H1 (cell line): ENCODE measurements at regions of chr22 and their contacts with region 1.

Region 1: GRCh38 chr22:43385770-43386641 is 25.8 kb upstream of the MPPED1 start:
- DNase-seq: peak; percentile 53 to 90
- H3K4me3 ChIP-seq: no peak overlapping the region
- H3K27ac ChIP-seq: no peak overlapping the region
- H3K4me1 ChIP-seq: peaks cover 0 to 9% (median 2%) of the 10 kb centered on the region in 4 experiments; a peak in 3 of 7 replicates
- H3K27me3 ChIP-seq: peaks cover 0 to 12% (median 3%) of the 10 kb centered on the region in 4 experiments; a peak in 5 of 7 replicates
- CTCF ChIP-seq: peak; percentile 95 to 96 (median 96)
- EP300 ChIP-seq: no peak
- POLR2A ChIP-seq: no peak
- RAD21 ChIP-seq: peak; percentile 100

Region 2: GRCh38 chr22:43244402-43244801 is 141.6 kb before region 1 on chr22:
- CTCF ChIA-PET with region 1: interaction called, 14 read pairs
- POLR2A ChIA-PET with region 1: no interaction called
- DNase-seq: no peak
- H3K4me3 ChIP-seq: no peak overlapping the region
- H3K27ac ChIP-seq: no peak overlapping the region
- H3K4me1 ChIP-seq: no peaks in the 10 kb centered on the region; a peak in 1 of 7 replicates
- H3K27me3 ChIP-seq: no peaks in the 10 kb centered on the region
- CTCF ChIP-seq: peak in 2 of 3 experiments; percentile 30 to 53; a peak in 2 of 4 replicates
- EP300 ChIP-seq: no peak
- POLR2A ChIP-seq: no peak
- RAD21 ChIP-seq: no peak

Region 3: GRCh38 chr22:43363315-43364168 is 22.5 kb before region 1 on chr22:
- CTCF ChIA-PET with region 1: interaction called, 20 read pairs
- POLR2A ChIA-PET with region 1: no interaction called
- DNase-seq: no peak
- H3K4me3 ChIP-seq: no peak overlapping the region
- H3K27ac ChIP-seq: no peak overlapping the region
- H3K4me1 ChIP-seq: peaks cover 0 to 4% (median under 1%) of the 10 kb centered on the region in 4 experiments; a peak in 4 of 7 replicates
- H3K27me3 ChIP-seq: no peaks in the 10 kb centered on the region
- CTCF ChIP-seq: no peak
- EP300 ChIP-seq: no peak
- POLR2A ChIP-seq: no peak
- RAD21 ChIP-seq: no peak

Region 4: GRCh38 chr22:43404673-43405385 is 18.8 kb after region 1 on chr22:
- CTCF ChIA-PET with region 1: interaction called, 26 read pairs
- POLR2A ChIA-PET with region 1: no interaction called
- DNase-seq: no peak
- H3K4me3 ChIP-seq: no peak overlapping the region
- H3K27ac ChIP-seq: no peak overlapping the region
- H3K4me1 ChIP-seq: no peaks in the 10 kb centered on the region
- H3K27me3 ChIP-seq: peaks cover 0 to 5% (median 3%) of the 10 kb centered on the region in 4 experiments; a peak in 3 of 7 replicates
- CTCF ChIP-seq: no peak
- EP300 ChIP-seq: no peak
- POLR2A ChIP-seq: no peak
- RAD21 ChIP-seq: no peak

Region 5: DNA sequence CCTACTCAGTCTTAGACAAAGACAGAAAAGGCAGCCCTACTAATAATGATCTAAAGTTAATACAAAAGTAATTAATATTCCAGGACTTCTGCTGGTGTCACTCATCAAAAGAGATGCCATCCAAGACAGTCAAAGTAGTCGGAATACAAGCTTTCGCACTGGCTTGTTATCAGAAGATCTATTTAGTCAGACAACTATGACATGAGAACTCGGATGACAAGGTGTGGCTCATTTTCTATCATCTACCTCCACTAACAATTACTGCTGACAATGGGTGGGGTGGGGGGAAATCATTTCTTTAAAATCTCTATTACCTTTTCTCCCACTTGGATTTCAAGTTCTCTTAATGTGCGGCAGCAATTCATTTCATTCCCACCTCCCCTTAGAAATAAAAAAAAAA is 369.4 kb after region 1 on chr22:
- CTCF ChIA-PET with region 1: no interaction called
- POLR2A ChIA-PET with region 1: no interaction called
- DNase-seq: no peak
- H3K4me3 ChIP-seq: no peak overlapping the region
- H3K27ac ChIP-seq: no peak overlapping the region
- H3K4me1 ChIP-seq: peaks cover 0 to 6% (median 0%) of the 10 kb centered on the region in 4 experiments; a peak in 2 of 7 replicates
- H3K27me3 ChIP-seq: no peaks in the 10 kb centered on the region; a peak in 1 of 7 replicates
- CTCF ChIP-seq: no peak
- EP300 ChIP-seq: no peak
- POLR2A ChIP-seq: no peak
- RAD21 ChIP-seq: no peak